PC-3 (cell line): ENCODE measurements at regions of chr10 and their contacts with region 1.

Region 1: GRCh38 chr10:13659897-13660550 is 73.3 kb downstream of the PRPF18 start:
- DNase-seq: peak; percentile 27
- ATAC-seq: no peak; the same call in 1 of the 2 replicates
- H3K4me3 ChIP-seq: no peak overlapping the region
- H3K27ac ChIP-seq: no peak overlapping the region
- H3K4me1 ChIP-seq: no peaks in the 10 kb centered on the region
- H3K27me3 ChIP-seq: no peaks in the 10 kb centered on the region
- CTCF ChIP-seq: peak; percentile 81

Region 2: GRCh38 chr10:13470270-13470669 is 189.8 kb before region 1 on chr10:
- CTCF ChIA-PET with region 1: no interaction called
- POLR2A ChIA-PET with region 1: no interaction called
- intact Hi-C with region 1: loop called (anchors 5 kb)
- DNase-seq: no peak
- ATAC-seq: no peak
- H3K4me3 ChIP-seq: no peak overlapping the region
- H3K27ac ChIP-seq: no peak overlapping the region
- H3K4me1 ChIP-seq: no peaks in the 10 kb centered on the region
- H3K27me3 ChIP-seq: no peaks in the 10 kb centered on the region
- CTCF ChIP-seq: no peak; the same call in 1 of the 2 replicates

Region 3: GRCh38 chr10:13608246-13608853 is 51.7 kb before region 1 on chr10:
- CTCF ChIA-PET with region 1: no interaction called
- POLR2A ChIA-PET with region 1: no interaction called
- intact Hi-C with region 1: no loop called
- DNase-seq: no peak
- ATAC-seq: no peak
- H3K4me3 ChIP-seq: no peak overlapping the region
- H3K27ac ChIP-seq: no peak overlapping the region
- H3K4me1 ChIP-seq: no peaks in the 10 kb centered on the region
- H3K27me3 ChIP-seq: no peaks in the 10 kb centered on the region
- CTCF ChIP-seq: no peak